HEK293 (cell line): ENCODE measurements at regions of chr17 and their contacts with region 1.

Region 1: DNA sequence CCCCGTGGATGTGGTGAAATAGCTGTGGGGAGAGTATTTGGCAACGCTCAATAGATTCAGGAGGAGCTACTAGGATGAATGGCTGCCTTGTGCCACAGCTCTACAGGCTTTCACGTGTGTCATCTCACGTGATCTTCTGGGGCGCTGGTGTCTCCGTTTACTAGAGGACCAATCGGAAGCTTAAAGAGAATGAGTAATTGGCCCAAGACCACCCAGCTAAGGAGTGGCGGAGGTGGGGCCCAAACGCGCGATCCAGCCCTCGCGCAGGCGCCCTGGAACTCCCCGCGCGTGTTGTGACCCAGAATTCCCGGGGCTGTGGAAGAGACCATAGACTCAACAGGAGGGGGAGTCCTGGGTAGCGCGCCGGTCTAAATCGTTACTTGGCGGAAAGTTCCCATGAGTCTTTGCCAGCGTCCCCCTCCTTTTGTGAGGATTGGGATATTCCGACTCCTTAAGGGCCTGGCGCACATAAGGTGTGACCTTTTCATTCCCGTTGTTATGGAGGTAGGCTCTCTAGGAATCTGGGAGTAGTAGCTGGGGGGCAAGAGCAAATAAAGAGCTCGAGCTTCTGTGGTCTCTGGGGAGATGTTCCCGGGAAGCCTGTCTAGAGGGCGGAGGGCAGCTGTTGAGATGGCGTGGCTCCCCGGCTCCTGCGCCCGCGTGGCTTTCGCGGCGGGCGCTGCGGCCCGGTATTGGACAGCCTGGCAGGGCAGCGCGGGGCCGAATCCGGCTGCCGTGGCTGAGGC is 23.4 kb downstream of the TRPV2 start:
- H3K4me3 ChIP-seq: peak overlapping the region; percentile 83
- H3K27ac ChIP-seq: peak overlapping the region; percentile 90
- H3K4me1 ChIP-seq: no peaks in the 10 kb centered on the region
- CTCF ChIP-seq: no peak

Region 2: DNA sequence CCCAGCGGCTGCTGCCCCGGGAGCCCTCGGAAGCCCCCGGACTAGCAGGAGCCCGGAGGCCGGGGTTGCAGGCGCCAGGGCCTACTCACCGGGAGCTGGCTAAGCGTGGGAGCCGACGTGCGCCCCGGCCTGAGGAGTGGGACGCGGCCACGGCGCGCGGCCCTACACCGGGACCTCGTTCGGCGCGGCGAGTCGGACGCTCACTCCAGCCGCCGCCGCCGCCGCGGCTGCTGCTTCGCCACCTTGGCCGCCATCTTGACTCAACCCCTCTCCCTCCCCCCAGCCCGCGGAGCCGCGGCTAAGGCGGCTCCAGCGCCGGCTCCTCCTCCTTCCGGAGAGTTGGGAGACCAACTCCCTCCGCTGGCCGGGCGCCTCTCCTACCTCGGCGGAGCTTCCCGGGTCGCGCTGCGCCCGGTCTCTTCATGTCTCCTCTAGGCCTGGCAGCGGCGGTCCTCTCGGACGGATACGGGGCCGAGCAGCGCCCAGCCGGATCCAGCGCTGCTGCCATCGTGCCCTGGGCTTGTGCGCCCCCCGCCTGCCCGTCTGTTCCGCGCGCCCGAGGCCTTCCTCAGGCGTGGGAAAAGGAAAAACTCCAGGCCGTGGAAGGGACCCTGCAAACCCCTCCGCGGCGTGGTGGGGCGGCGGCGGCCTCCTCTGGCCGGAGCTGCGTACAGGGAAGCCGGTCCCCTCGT is 223.3 kb before region 1 on chr17 and contains the start of gene NCOR1:
- CTCF ChIA-PET with region 1: no interaction called
- POLR2A ChIA-PET with region 1: interaction called, 14 read pairs
- H3K4me3 ChIP-seq: peak within 1 kb of the TSS; percentile 99
- H3K27ac ChIP-seq: peak within 1 kb of the TSS; percentile 91
- H3K4me1 ChIP-seq: peaks cover 12% of the 10 kb centered on the region; the same call in 1 of the 2 replicates
- CTCF ChIP-seq: peak; percentile 92

Region 3: GRCh38 chr17:16258901-16259300 is 179.8 kb before region 1 on chr17:
- CTCF ChIA-PET with region 1: no interaction called
- POLR2A ChIA-PET with region 1: no interaction called
- H3K4me3 ChIP-seq: no peak overlapping the region
- H3K27ac ChIP-seq: no peak overlapping the region
- H3K4me1 ChIP-seq: no peaks in the 10 kb centered on the region
- CTCF ChIP-seq: no peak

Region 4: DNA sequence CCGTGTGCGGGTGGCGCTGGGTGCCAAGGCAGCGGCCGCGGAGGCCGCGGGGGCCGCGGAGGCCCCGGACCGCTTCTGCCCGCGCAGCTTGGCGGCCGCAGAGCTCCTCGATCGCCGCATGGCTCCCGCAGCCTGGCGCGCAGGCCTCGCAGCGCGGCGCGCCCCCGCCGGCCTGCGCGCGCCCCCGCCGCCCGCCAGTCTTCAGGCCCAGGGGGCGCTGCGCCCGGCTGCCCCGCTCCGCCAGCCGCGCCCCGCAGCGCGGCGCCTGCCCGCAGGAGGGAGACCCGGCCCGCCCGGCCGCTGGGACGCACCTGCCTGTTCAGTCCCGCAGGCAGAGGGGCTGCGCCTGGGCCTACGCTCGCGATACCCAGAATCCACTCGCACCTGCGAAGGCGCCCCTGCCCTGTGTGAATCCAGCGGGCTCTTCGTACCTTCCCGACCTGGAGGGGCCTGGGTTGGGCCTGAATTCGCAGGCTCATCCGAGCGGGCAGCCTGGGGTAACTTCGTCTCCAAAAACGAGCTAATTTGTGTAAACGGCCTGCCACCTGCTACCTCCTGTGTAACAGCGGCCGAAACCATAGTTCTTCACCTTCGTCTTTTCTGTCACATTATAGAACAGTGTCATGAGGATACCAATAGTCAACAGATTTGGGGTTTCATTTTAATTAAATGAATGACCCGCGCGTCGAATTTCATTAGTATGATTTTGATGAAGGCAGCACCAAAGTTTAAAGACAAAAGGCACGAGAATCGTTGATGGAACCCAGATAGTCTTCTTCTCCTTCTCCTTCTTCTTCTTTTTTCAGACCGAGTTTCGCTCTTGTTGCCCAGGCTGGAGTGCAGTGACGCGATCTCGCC is 85.2 kb before region 1 on chr17 and contains the start of gene CENPV:
- CTCF ChIA-PET with region 1: interaction called, 4 read pairs
- POLR2A ChIA-PET with region 1: interaction called, 14 read pairs
- H3K4me3 ChIP-seq: peak within 1 kb of the TSS; percentile 77
- H3K27ac ChIP-seq: peak within 1 kb of the TSS; percentile 97
- H3K4me1 ChIP-seq: peaks cover 3% of the 10 kb centered on the region; the same call in 1 of the 2 replicates
- CTCF ChIP-seq: peak; percentile 19; the same call in 1 of the 2 replicates

Region 5: DNA sequence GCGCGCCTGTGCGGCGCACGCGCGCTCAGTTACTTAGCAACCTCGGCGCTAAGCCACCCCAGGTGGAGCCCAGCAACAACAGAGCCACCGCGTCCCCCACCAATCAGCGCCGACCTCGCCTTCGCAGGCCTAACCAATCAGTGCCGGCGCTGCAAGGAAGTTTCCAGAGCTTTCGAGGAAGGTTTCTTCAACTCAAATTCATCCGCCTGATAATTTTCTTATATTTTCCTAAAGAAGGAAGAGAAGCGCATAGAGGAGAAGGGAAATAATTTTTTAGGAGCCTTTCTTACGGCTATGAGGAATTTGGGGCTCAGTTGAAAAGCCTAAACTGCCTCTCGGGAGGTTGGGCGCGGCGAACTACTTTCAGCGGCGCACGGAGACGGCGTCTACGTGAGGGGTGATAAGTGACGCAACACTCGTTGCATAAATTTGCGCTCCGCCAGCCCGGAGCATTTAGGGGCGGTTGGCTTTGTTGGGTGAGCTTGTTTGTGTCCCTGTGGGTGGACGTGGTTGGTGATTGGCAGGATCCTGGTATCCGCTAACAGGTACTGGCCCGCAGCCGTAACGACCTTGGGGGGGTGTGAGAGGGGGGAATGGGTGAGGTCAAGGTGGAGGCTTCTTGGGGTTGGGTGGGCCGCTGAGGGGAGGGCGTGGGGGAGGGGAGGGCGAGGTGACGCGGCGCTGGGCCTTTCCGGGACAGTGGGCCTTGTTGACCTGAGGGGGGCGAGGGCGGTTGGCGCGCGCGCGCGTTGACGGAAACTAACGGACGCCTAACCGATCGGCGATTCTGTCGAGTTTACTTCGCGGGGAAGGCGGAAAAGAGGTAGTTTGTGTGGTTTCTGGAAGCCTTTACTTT is 57.9 kb before region 1 on chr17 and contains the start of gene UBB:
- CTCF ChIA-PET with region 1: interaction called, 9 read pairs
- POLR2A ChIA-PET with region 1: interaction called, 86 read pairs
- H3K4me3 ChIP-seq: peak within 1 kb of the TSS; percentile 67
- H3K27ac ChIP-seq: peak within 1 kb of the TSS; percentile 100
- H3K4me1 ChIP-seq: peaks cover 10% of the 10 kb centered on the region; the same call in 1 of the 2 replicates
- CTCF ChIP-seq: peak; percentile 72

Region 6: GRCh38 chr17:16415031-16415924 is 23.5 kb before region 1 on chr17 and contains the start of gene TRPV2:
- CTCF ChIA-PET with region 1: interaction called, 8 read pairs
- POLR2A ChIA-PET with region 1: interaction called, 25 read pairs
- H3K4me3 ChIP-seq: no peak within 1 kb of the TSS
- H3K27ac ChIP-seq: no peak within 1 kb of the TSS
- H3K4me1 ChIP-seq: peaks cover 11% of the 10 kb centered on the region; the same call in 1 of the 2 replicates
- CTCF ChIP-seq: no peak; the same call in 1 of the 2 replicates

Region 7: DNA sequence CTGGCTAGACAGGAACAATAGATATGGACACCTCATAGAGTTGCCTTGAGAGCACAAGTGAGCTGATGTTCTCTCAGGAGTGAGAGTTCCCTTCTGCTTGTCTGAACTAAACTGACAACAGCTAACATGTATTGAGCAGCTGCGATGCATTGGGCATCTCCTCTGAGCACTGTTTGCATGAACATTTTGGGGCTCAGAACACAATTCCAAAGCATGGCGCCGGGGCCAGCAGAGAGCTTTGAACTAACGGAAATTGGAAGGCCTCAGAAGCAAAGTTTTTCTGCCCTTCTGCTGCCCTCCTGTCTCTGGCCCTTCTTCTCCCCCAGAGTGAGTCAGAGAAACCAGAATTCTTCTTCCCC is 14.7 kb after region 1 on chr17:
- CTCF ChIA-PET with region 1: interaction called, 31 read pairs
- POLR2A ChIA-PET with region 1: interaction called, 17 read pairs
- H3K4me3 ChIP-seq: no peak overlapping the region
- H3K27ac ChIP-seq: no peak overlapping the region
- H3K4me1 ChIP-seq: no peaks in the 10 kb centered on the region
- CTCF ChIP-seq: no peak

Region 8: GRCh38 chr17:16537130-16537458 is 98.4 kb after region 1 on chr17:
- CTCF ChIA-PET with region 1: no interaction called
- POLR2A ChIA-PET with region 1: interaction called, 27 read pairs
- H3K4me3 ChIP-seq: no peak overlapping the region
- H3K27ac ChIP-seq: no peak overlapping the region
- H3K4me1 ChIP-seq: peaks cover 4% of the 10 kb centered on the region
- CTCF ChIP-seq: no peak